ENCODE measurements at regions of chr9 and their contacts with region 1.

Region 1: DNA sequence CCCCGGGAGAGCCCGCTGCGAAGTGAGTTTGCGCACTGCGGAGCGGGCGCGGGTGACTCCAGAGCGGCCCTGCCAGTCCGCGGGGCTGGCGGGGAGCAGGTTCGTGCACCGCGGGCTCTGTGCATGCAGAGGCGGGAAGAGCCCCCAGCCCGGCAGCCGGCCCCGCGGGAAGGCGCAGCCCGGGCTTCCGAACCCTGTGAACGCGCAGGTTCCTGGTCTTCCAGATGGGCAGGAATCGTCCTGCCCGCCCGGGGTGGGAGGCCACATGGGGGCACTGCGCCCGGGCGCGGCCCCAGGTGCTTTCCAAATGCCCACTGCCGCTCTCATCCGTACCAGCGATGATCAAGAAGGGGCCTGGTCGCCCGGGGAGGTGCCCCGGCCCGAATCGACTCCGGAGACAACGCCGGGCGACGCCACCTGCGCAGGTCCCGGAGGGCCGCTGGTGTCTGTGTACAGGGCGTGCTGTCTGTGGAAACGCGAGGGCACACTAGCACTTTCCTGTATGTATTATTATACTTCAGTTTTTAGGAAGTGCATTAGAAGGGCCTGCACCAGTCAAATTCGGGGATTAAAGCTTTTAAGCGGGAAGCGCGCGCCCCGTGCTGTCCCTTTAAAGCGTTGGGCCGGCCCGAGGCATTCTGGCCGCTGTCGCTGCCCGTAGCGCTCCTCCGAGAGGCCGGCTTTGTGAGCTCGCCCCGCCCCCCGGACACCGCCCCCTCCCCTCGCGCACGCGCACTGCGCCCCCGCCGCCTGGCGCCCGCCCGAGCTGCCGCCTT is at the start of gene WDR5:
- DNase-seq: peak; percentile 97
- H3K4me3 ChIP-seq: peak within 1 kb of the TSS; percentile 74 to 98 (median 90)
- H3K27ac ChIP-seq: peak within 1 kb of the TSS; percentile 86 to 94 (median 92)
- H3K4me1 ChIP-seq: peaks cover 16 to 59% (median 48%) of the 10 kb centered on the region in 6 donors
- H3K27me3 ChIP-seq: no peaks in the 10 kb centered on the region
- CTCF ChIP-seq: peak in 7 of 11 experiments; percentile 6 to 35 (median 19)
- POLR2A ChIP-seq: peak in 1 of 3 donors; percentile 21
- total RNA-seq, gene WDR5: 13.8 to 23.1 (median 19.1) TPM

Region 2: GRCh38 chr9:133371261-133371711 is 764.2 kb before region 1 on chr9:
- intact Hi-C with region 1: no loop called
- DNase-seq: peak; percentile 82
- H3K4me3 ChIP-seq: peak overlapping the region in 3 of 8 donors; percentile 3 to 47 (median 14)
- H3K27ac ChIP-seq: peak overlapping the region; percentile 14 to 85 (median 72)
- H3K4me1 ChIP-seq: peaks cover 57 to 93% (median 82%) of the 10 kb centered on the region in 6 donors
- H3K27me3 ChIP-seq: no peaks in the 10 kb centered on the region
- CTCF ChIP-seq: no peak
- POLR2A ChIP-seq: no peak

Region 3: DNA sequence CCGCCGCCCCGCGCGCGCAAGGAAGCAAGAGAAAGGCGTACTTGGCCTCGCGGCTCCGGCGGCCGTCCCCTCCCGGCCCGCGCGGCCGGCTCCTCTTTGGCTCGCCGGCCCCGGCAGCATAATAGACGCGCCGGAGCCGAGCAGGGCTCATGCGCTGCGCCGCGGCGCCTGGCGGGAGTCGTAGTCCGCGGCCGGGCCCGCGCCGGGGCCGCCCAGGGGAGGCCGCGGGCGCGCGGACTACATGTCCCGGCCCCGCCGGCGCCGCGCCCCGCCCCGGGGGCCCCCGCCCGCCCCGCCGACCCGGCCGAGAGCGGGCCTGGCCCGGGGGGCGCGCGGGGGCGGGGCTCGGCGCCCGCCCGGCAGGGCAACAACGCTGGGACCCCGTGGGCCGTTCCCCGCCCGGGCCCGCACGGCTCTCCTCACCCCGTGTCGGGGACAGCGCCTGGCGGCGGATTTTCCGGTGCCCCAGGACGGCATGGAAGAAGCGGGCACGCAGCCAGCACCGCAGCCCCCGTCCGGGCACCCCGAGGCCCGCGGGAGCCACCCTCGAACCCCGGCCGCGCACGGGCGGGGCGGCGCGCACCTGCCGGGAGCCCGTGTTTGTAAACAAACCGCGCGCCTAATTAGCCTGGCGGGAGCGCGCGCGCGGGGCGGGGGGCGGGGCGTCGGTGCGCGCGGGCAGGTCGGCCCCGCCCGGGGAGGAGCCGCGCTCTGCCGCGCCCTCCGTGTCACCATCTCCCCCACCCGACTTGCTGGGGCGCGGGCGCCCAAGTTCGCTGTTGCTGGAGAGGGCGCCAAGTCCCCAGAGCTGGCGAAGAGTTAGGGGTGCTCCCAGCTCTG is 67.4 kb before region 1 on chr9 and contains the start of gene BRD3:
- intact Hi-C with region 1: loop called (anchors 10 kb)
- DNase-seq: peak; percentile 96
- H3K4me3 ChIP-seq: peak within 1 kb of the TSS; percentile 56 to 94 (median 78)
- H3K27ac ChIP-seq: peak within 1 kb of the TSS; percentile 95 to 100 (median 99)
- H3K4me1 ChIP-seq: peaks cover 10 to 51% (median 44%) of the 10 kb centered on the region in 6 donors
- H3K27me3 ChIP-seq: peaks cover 0 to 37% (median 8%) of the 10 kb centered on the region in 7 donors
- CTCF ChIP-seq: no peak
- POLR2A ChIP-seq: peak in 1 of 3 donors; percentile 61
- total RNA-seq, gene BRD3: 21.3 to 54.0 (median 35.9) TPM

Measured in spleen (tissue), 13 donors.